ENCODE measurements at regions of chr12 and their contacts with region 1.

Region 1: GRCh38 chr12:6752921-6753771 is at the start of gene MLF2:
- DNase-seq: peak; percentile 98
- H3K4me3 Mint-ChIP-seq: peak within 1 kb of the TSS; percentile 92
- H3K27ac Mint-ChIP-seq: peak within 1 kb of the TSS; percentile 90
- H3K4me1 Mint-ChIP-seq: peaks cover 25% of the 10 kb centered on the region
- H3K27me3 Mint-ChIP-seq: peaks cover 4% of the 10 kb centered on the region
- total RNA-seq, gene MLF2: 101 to 108 TPM

Region 2: GRCh38 chr12:6688999-6689882 is 63.9 kb before region 1 on chr12 and contains the start of gene ZNF384:
- CTCF ChIA-PET with region 1: interaction called, 19 read pairs
- POLR2A ChIA-PET with region 1: interaction called, 28 read pairs
- DNase-seq: peak; percentile 97
- H3K4me3 Mint-ChIP-seq: peak within 1 kb of the TSS; percentile 87
- H3K27ac Mint-ChIP-seq: peak within 1 kb of the TSS; percentile 91
- H3K4me1 Mint-ChIP-seq: peaks cover 55% of the 10 kb centered on the region
- H3K27me3 Mint-ChIP-seq: no peaks in the 10 kb centered on the region
- total RNA-seq, gene ZNF384: 69.5 to 78.1 TPM

Region 3: GRCh38 chr12:6730169-6730568 is 23.0 kb before region 1 on chr12:
- CTCF ChIA-PET with region 1: interaction called, 26 read pairs
- POLR2A ChIA-PET with region 1: interaction called, 62 read pairs
- DNase-seq: no peak
- H3K4me3 Mint-ChIP-seq: no peak overlapping the region
- H3K27ac Mint-ChIP-seq: no peak overlapping the region
- H3K4me1 Mint-ChIP-seq: peaks cover 8% of the 10 kb centered on the region
- H3K27me3 Mint-ChIP-seq: no peaks in the 10 kb centered on the region

Region 4: GRCh38 chr12:6771091-6771495 is 17.9 kb after region 1 on chr12:
- CTCF ChIA-PET with region 1: interaction called, 78 read pairs
- POLR2A ChIA-PET with region 1: interaction called, 73 read pairs
- DNase-seq: no peak
- H3K4me3 Mint-ChIP-seq: no peak overlapping the region
- H3K27ac Mint-ChIP-seq: no peak overlapping the region
- H3K4me1 Mint-ChIP-seq: peaks cover 72% of the 10 kb centered on the region
- H3K27me3 Mint-ChIP-seq: peaks cover 13% of the 10 kb centered on the region

Region 5: GRCh38 chr12:6786416-6787094 is 33.4 kb after region 1 on chr12:
- CTCF ChIA-PET with region 1: interaction called, 53 read pairs
- POLR2A ChIA-PET with region 1: interaction called, 63 read pairs
- DNase-seq: no peak
- H3K4me3 Mint-ChIP-seq: peak overlapping the region; percentile 33
- H3K27ac Mint-ChIP-seq: peak overlapping the region; percentile 74
- H3K4me1 Mint-ChIP-seq: peaks cover 50% of the 10 kb centered on the region
- H3K27me3 Mint-ChIP-seq: no peaks in the 10 kb centered on the region

Region 6: GRCh38 chr12:6825398-6826124 is 72.4 kb after region 1 on chr12:
- CTCF ChIA-PET with region 1: interaction called, 48 read pairs
- POLR2A ChIA-PET with region 1: interaction called, 33 read pairs
- DNase-seq: peak; percentile 84
- H3K4me3 Mint-ChIP-seq: no peak overlapping the region
- H3K27ac Mint-ChIP-seq: no peak overlapping the region
- H3K4me1 Mint-ChIP-seq: peaks cover 27% of the 10 kb centered on the region
- H3K27me3 Mint-ChIP-seq: peaks cover 72% of the 10 kb centered on the region